ENCODE measurements at regions of chr18 and their contacts with region 1.

Region 1: DNA sequence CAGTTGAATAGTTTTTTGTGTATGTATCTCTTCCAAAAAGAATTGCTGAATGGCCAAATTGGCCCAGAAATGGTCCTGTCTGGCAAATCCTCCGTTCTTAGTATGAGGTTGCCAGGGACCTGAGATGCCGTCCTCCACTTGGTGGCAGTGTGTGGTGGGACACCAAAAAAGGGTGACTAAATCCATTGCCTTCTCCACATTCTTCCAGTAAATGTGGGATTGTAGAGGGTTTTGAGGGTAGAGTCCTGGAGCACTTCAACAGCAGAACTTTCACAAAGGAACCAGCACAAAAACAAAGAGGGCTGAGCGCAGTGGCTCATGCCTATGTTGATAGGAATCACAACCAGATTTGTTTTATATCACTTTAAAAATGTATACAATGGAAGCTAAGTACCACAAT is 199.9 kb downstream of the BCL2 start:
- DNase-seq: peak; percentile 50
- H3K4me3 ChIP-seq: no peak overlapping the region
- H3K27ac ChIP-seq: no peak overlapping the region
- H3K4me1 ChIP-seq: no peaks in the 10 kb centered on the region
- H3K27me3 ChIP-seq: no peaks in the 10 kb centered on the region
- CTCF ChIP-seq: peak; percentile 37

Region 2: DNA sequence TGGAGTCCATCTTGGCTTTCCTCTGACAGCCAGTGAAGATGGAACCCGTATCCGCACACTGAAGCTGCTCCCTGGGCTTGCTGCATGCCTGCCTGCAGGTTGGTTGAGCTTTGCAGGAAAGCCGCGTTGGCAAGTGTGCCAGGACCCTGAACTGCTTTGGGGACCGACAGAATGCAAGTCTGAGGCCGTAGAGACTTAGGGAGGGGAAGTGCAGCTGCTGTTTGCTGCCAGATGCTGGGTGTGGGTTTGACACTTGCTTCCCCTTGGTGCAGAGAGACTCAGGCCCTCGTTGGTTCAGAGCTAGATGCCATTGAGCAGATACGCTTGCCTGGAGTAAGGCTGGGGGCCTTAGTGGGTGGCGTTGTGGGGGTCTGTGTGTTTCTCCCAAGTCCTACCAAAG is 417.4 kb before region 1 on chr18:
- intact Hi-C with region 1: no loop called
- DNase-seq: no peak
- H3K4me3 ChIP-seq: no peak overlapping the region
- H3K27ac ChIP-seq: no peak overlapping the region
- H3K4me1 ChIP-seq: no peaks in the 10 kb centered on the region
- H3K27me3 ChIP-seq: no peaks in the 10 kb centered on the region
- CTCF ChIP-seq: no peak

Region 3: DNA sequence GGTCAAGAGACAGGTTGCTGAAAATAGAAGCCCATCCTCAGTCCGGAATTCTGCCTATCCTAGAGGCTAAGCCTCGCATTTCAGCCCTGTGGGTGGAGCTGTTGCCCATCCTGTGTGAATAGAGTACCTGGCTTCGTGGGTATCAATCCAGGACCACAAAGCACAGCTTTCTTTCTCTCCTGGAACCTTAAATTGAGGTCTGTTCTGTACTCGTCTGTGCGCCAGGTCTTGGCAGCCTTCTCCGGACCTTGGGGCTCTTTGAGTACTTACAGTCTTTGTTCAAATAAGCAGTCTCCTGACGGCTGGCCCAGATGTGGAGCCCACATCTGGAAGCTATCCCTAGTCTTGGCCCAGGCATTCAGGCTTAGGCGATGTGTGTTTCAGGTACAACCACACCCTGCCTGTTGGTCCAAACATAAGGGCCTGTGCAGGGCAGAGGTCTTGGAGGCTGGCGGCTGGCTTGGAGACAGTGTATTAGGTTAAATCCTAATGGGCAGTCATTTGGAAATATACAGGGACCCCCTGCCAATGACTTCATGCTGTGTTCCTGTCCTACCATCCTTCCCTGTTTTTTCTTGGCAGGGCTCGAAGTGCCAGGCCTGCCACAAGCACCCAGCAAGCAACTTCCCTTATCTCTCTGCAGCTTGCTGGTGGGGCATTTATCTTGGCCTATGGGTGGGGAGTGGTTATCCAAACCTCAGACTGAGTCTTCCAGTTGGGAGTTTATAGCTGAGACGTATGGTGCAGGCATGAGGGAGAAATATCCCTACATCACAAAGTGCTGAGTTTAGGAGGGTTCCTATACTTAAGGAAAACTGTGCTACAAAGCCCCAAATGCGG is 94.2 kb before region 1 on chr18:
- intact Hi-C with region 1: loop called (anchors 10 kb)
- DNase-seq: peak; percentile 39
- H3K4me3 ChIP-seq: no peak overlapping the region
- H3K27ac ChIP-seq: no peak overlapping the region
- H3K4me1 ChIP-seq: no peaks in the 10 kb centered on the region
- H3K27me3 ChIP-seq: no peaks in the 10 kb centered on the region
- CTCF ChIP-seq: no peak

Region 4: GRCh38 chr18:63439334-63439733 is 319.7 kb after region 1 on chr18:
- intact Hi-C with region 1: loop called (anchors 5 kb)
- DNase-seq: peak; percentile 51
- H3K4me3 ChIP-seq: no peak overlapping the region
- H3K27ac ChIP-seq: no peak overlapping the region
- H3K4me1 ChIP-seq: no peaks in the 10 kb centered on the region
- H3K27me3 ChIP-seq: no peaks in the 10 kb centered on the region
- CTCF ChIP-seq: peak; percentile 61

Measured in colonic mucosa (tissue), 4 donors.